ENCODE measurements at regions of chr1 and their contacts with region 1.

Region 1: DNA sequence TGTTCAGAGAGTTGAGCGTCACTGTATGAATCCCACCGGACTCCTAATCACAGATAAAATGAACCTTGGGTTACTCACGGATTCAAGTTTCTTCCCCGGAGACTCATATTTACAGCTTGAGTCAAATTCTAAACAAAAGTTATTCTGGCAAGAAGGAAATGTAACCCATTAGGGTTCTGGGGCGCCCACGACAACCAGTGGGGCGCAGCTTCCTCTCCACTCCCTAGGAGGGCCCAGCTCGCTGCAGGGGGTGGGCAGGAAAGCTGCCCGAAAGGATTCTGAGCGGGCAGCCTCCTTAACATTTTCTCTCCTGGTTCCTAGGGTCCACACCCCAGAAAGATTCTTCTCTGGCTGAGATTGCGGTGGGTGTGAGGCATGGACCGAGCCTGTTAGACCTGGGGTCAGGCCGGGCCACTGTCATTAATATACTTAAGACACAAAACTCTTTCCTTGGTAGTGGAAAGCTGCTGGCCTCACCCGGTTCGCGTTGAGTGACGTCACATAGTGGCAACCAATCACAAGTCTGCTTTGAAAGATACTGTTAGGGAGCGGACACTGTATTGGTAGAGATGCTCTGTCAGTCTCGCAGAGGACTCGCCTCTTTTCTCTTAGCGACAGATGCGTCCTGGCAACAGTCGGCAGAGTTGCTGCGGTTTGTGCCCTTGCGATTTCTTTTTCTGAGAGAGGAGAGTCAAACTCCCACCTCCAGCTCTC is 13.6 kb upstream of the MCOLN3 start:
- DNase-seq: peak; percentile 99
- H3K4me3 ChIP-seq: peak overlapping the region; percentile 49
- H3K27ac ChIP-seq: peak overlapping the region; percentile 87
- H3K4me1 ChIP-seq: peaks cover 42% of the 10 kb centered on the region
- H3K27me3 ChIP-seq: no peaks in the 10 kb centered on the region
- CTCF ChIP-seq: no peak

Region 2: GRCh38 chr1:84996846-84997666 is 64.8 kb before region 1 on chr1 and contains the start of gene MCOLN2:
- CTCF ChIA-PET with region 1: no interaction called
- POLR2A ChIA-PET with region 1: no interaction called
- intact Hi-C with region 1: loop called (anchors 5 kb)
- DNase-seq: peak; percentile 62
- H3K4me3 ChIP-seq: peak within 1 kb of the TSS; percentile 57
- H3K27ac ChIP-seq: no peak within 1 kb of the TSS
- H3K4me1 ChIP-seq: peaks cover 7% of the 10 kb centered on the region
- H3K27me3 ChIP-seq: peaks cover 59% of the 10 kb centered on the region
- CTCF ChIP-seq: no peak
- total RNA-seq, gene MCOLN2: 0.98 and 1.7 TPM in 2 replicates

Region 3: GRCh38 chr1:85200870-85201339 is 139.0 kb after region 1 on chr1 and contains the start of gene SYDE2:
- CTCF ChIA-PET with region 1: no interaction called
- POLR2A ChIA-PET with region 1: no interaction called
- intact Hi-C with region 1: loop called (anchors 5 kb)
- DNase-seq: peak; percentile 87
- H3K4me3 ChIP-seq: peak within 1 kb of the TSS; percentile 92
- H3K27ac ChIP-seq: peak within 1 kb of the TSS; percentile 97
- H3K4me1 ChIP-seq: peaks cover 29% of the 10 kb centered on the region
- H3K27me3 ChIP-seq: no peaks in the 10 kb centered on the region
- CTCF ChIP-seq: no peak
- total RNA-seq, gene SYDE2: 10.4 and 10.9 TPM in 2 replicates

Region 4: DNA sequence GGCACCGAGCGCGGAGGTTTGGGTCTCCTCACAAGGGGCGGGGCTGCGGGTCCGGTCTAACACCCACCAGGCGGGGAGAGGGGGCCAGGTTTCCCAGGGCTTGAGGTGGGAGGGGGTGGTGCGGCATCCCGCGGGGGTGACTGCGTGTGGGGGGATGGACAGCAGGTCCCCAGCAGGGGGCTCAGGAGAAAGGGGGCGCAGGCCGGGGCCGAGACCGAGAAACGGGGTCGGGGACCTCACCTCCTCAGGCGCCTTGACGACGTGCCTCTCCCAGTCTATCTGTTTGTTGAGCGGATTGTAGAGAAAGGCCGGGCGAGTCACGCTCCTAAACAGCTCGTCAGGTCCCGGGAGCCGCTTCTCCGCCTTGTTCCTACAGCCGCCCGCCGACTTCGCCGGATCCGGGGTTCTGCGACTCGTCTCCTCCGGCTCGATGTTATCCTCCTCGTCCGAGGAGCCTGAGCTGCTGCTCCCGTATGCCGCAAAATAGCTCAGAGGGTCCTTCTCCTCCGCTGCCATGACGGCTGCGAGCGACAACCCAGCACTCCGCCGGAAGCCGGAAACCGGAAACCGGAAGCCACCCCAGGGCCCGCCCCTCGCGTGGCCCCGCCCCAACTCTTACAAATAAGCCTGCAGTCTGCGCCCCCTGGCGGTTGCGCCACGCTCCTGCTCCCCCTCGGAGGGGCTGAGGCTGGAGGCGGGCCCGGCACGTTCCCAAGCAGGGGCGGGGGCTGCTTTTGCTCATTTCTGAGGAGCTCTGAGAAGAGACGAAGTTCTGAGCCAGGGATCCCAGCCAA is 197.4 kb after region 1 on chr1 and contains the start of gene C1orf52:
- CTCF ChIA-PET with region 1: no interaction called
- POLR2A ChIA-PET with region 1: no interaction called
- intact Hi-C with region 1: loop called (anchors 5 kb)
- DNase-seq: peak; percentile 96
- H3K4me3 ChIP-seq: peak within 1 kb of the TSS; percentile 78
- H3K27ac ChIP-seq: peak within 1 kb of the TSS; percentile 73
- H3K4me1 ChIP-seq: peaks cover 8% of the 10 kb centered on the region
- H3K27me3 ChIP-seq: no peaks in the 10 kb centered on the region
- CTCF ChIP-seq: peak; percentile 99
- total RNA-seq, gene C1orf52: 30.2 and 31.9 TPM in 2 replicates